SK-N-SH (cell line): ENCODE measurements at regions of chr20 and their contacts with region 1.

Region 1: GRCh38 chr20:9616833-9617489 is 102.6 kb downstream of the LAMP5 start:
- DNase-seq: peak; percentile 52
- H3K4me3 ChIP-seq: peak overlapping the region in 1 of 2 experiments; percentile 13; a peak in 1 of 4 replicates
- H3K27ac ChIP-seq: no peak overlapping the region
- H3K4me1 ChIP-seq: peaks cover 0 to 8% of the 10 kb centered on the region in 2 experiments; a peak in 2 of 4 replicates
- H3K27me3 ChIP-seq: no peaks in the 10 kb centered on the region
- CTCF ChIP-seq: peak; percentile 93
- EP300 ChIP-seq: no peak
- RAD21 ChIP-seq: peak; percentile 94

Region 2: GRCh38 chr20:9467995-9468394 is 149.0 kb before region 1 on chr20:
- CTCF ChIA-PET with region 1: interaction called, 11 read pairs
- POLR2A ChIA-PET with region 1: no interaction called
- DNase-seq: peak; percentile 44
- H3K4me3 ChIP-seq: no peak overlapping the region
- H3K27ac ChIP-seq: no peak overlapping the region
- H3K4me1 ChIP-seq: peaks cover 0 to 9% of the 10 kb centered on the region in 2 experiments; a peak in 2 of 4 replicates
- H3K27me3 ChIP-seq: no peaks in the 10 kb centered on the region
- CTCF ChIP-seq: peak; percentile 76
- EP300 ChIP-seq: no peak
- RAD21 ChIP-seq: peak; percentile 82

Region 3: GRCh38 chr20:9838378-9839295 is 221.7 kb after region 1 on chr20 and contains the start of gene PAK5:
- CTCF ChIA-PET with region 1: interaction called, 21 read pairs
- POLR2A ChIA-PET with region 1: no interaction called
- DNase-seq: peak; percentile 94
- H3K4me3 ChIP-seq: peak within 1 kb of the TSS; percentile 66 to 67
- H3K27ac ChIP-seq: peak within 1 kb of the TSS in 1 of 2 experiments; percentile 65; a peak in 2 of 4 replicates
- H3K4me1 ChIP-seq: peaks cover 0 to 7% of the 10 kb centered on the region in 2 experiments; a peak in 1 of 4 replicates
- H3K27me3 ChIP-seq: no peaks in the 10 kb centered on the region
- CTCF ChIP-seq: no peak
- EP300 ChIP-seq: no peak
- RAD21 ChIP-seq: no peak
- polyA plus RNA-seq, gene PAK5: 0.03 and 0.06 TPM in 2 replicates

Region 4: DNA sequence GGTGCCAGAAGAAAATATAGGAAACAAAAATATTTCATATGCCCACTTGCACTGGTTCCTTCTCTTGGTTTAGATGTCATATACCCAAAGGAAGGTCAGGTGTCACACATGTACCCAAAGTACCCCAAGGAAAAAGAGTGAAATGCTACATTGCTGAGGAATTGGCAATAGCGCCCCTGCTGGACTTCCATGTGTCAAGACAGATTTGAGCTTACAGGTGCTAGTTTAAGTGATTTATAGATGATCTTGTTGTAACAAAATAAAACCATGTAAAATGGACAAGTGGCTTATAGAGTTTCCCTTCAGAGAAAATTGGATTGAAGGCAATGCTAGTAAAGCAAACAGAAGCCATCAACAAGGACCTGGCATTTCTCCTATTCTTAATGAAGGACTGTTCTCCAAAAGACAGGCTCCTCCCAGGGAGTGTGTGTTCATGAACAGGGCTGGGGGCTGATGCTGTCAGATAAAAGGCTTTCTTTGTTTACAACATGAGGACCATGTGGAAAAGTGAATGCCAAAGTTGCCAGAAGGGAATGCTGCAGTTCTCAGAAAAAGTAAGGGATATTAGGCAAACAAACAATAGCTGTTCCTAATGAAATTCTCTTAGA is 286.2 kb after region 1 on chr20:
- CTCF ChIA-PET with region 1: interaction called, 113 read pairs
- POLR2A ChIA-PET with region 1: no interaction called
- DNase-seq: no peak
- H3K4me3 ChIP-seq: no peak overlapping the region
- H3K27ac ChIP-seq: no peak overlapping the region
- H3K4me1 ChIP-seq: no peaks in the 10 kb centered on the region
- H3K27me3 ChIP-seq: peaks cover 6% of the 10 kb centered on the region; the same call in 1 of the 2 replicates
- CTCF ChIP-seq: peak; percentile 53
- EP300 ChIP-seq: no peak
- RAD21 ChIP-seq: no peak

Region 5: GRCh38 chr20:9966966-9967365 is 350.0 kb after region 1 on chr20:
- CTCF ChIA-PET with region 1: interaction called, 19 read pairs
- POLR2A ChIA-PET with region 1: no interaction called
- DNase-seq: peak; percentile 30
- H3K4me3 ChIP-seq: no peak overlapping the region
- H3K27ac ChIP-seq: no peak overlapping the region
- H3K4me1 ChIP-seq: peaks cover 0 to 6% of the 10 kb centered on the region in 2 experiments; a peak in 1 of 4 replicates
- H3K27me3 ChIP-seq: no peaks in the 10 kb centered on the region; the same call in 1 of the 2 replicates
- CTCF ChIP-seq: peak; percentile 41
- EP300 ChIP-seq: no peak
- RAD21 ChIP-seq: peak; percentile 28

Region 6: GRCh38 chr20:11544029-11544678 is 1927.2 kb after region 1 on chr20:
- CTCF ChIA-PET with region 1: interaction called, 24 read pairs
- POLR2A ChIA-PET with region 1: no interaction called
- DNase-seq: peak; percentile 43
- H3K4me3 ChIP-seq: no peak overlapping the region
- H3K27ac ChIP-seq: 0 out of 4 replicates have a peak overlapping the region, but pooled peaks of 1 of the 2 experiments have one; percentile 5
- H3K4me1 ChIP-seq: no peaks in the 10 kb centered on the region
- H3K27me3 ChIP-seq: no peaks in the 10 kb centered on the region
- CTCF ChIP-seq: peak; percentile 75
- EP300 ChIP-seq: no peak
- RAD21 ChIP-seq: peak; percentile 83